H1 (cell line): ENCODE measurements at regions of chr7 and their contacts with region 1.

Region 1: GRCh38 chr7:131040467-131040932 is 287.2 kb upstream of the MKLN1 start:
- DNase-seq: peak in 1 of 2 experiments; percentile 62
- H3K4me3 ChIP-seq: no peak overlapping the region
- H3K27ac ChIP-seq: no peak overlapping the region
- H3K4me1 ChIP-seq: peaks cover 3 to 11% (median 7%) of the 10 kb centered on the region in 4 experiments; a peak in 4 of 7 replicates
- H3K27me3 ChIP-seq: no peaks in the 10 kb centered on the region
- CTCF ChIP-seq: peak in 2 of 3 experiments; percentile 79 to 88; a peak in 3 of 4 replicates
- EP300 ChIP-seq: no peak
- POLR2A ChIP-seq: no peak
- RAD21 ChIP-seq: peak; percentile 87 to 89

Region 2: GRCh38 chr7:130875265-130875741 is 165.2 kb before region 1 on chr7:
- CTCF ChIA-PET with region 1: interaction called, 19 read pairs
- POLR2A ChIA-PET with region 1: no interaction called
- DNase-seq: peak; percentile 54 to 86
- H3K4me3 ChIP-seq: no peak overlapping the region
- H3K27ac ChIP-seq: no peak overlapping the region
- H3K4me1 ChIP-seq: peaks cover 0 to 10% (median 2%) of the 10 kb centered on the region in 4 experiments; a peak in 2 of 7 replicates
- H3K27me3 ChIP-seq: no peaks in the 10 kb centered on the region
- CTCF ChIP-seq: peak; percentile 88 to 97 (median 96)
- EP300 ChIP-seq: no peak
- POLR2A ChIP-seq: no peak
- RAD21 ChIP-seq: peak; percentile 91 to 95

Region 3: GRCh38 chr7:131007394-131008330 is 32.8 kb before region 1 on chr7:
- CTCF ChIA-PET with region 1: interaction called, 10 read pairs
- POLR2A ChIA-PET with region 1: no interaction called
- DNase-seq: peak in 1 of 2 experiments; percentile 67
- H3K4me3 ChIP-seq: 0 out of 8 replicates have a peak overlapping the region, but pooled peaks of 1 of the 4 experiments have one; percentile 18
- H3K27ac ChIP-seq: no peak overlapping the region
- H3K4me1 ChIP-seq: peaks cover 0 to 4% (median under 1%) of the 10 kb centered on the region in 4 experiments; a peak in 6 of 7 replicates
- H3K27me3 ChIP-seq: no peaks in the 10 kb centered on the region; a peak in 1 of 7 replicates
- CTCF ChIP-seq: peak; percentile 29 to 68 (median 60)
- EP300 ChIP-seq: no peak
- POLR2A ChIP-seq: no peak
- RAD21 ChIP-seq: peak; percentile 70 to 74